Common myeloid progenitor, CD34-positive (primary cell): ENCODE measurements at regions of chr10 and their contacts with region 1.

Region 1: DNA sequence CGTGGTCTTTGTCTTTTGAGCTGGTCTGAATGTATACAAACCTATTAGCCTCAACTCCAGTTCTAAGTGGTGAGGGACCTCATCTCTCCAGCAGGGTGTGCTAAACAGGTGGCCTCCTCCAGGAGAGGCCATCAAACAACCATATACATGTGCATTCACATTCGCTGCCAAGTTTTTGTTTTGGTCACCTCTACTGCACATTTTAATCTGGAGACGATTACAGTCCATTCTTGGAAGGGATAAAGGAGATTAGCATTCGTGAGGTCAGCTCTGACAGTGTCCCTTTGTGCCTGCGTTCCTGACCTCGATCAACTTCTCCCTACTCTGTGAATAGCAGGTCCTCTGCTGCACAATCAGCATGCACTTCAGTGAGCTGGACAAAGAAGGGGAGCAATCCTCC is 60.8 kb downstream of the RHOBTB1 start:
- DNase-seq: peak; percentile 36 to 68 (median 66)
- H3K4me3 ChIP-seq: no peak overlapping the region
- H3K27ac ChIP-seq: no peak overlapping the region
- H3K4me1 ChIP-seq: no peaks in the 10 kb centered on the region
- H3K27me3 ChIP-seq: no peaks in the 10 kb centered on the region

Region 2: GRCh38 chr10:60870803-60871202 is 12.4 kb before region 1 on chr10:
- CTCF ChIA-PET with region 1: interaction called, 11 read pairs
- POLR2A ChIA-PET with region 1: no interaction called
- DNase-seq: no peak
- H3K4me3 ChIP-seq: no peak overlapping the region
- H3K27ac ChIP-seq: no peak overlapping the region
- H3K4me1 ChIP-seq: no peaks in the 10 kb centered on the region
- H3K27me3 ChIP-seq: no peaks in the 10 kb centered on the region

Region 3: GRCh38 chr10:60896033-60896432 is 12.8 kb after region 1 on chr10:
- CTCF ChIA-PET with region 1: interaction called, 12 read pairs
- POLR2A ChIA-PET with region 1: no interaction called
- DNase-seq: no peak
- H3K4me3 ChIP-seq: no peak overlapping the region
- H3K27ac ChIP-seq: no peak overlapping the region
- H3K4me1 ChIP-seq: no peaks in the 10 kb centered on the region
- H3K27me3 ChIP-seq: no peaks in the 10 kb centered on the region